SK-N-SH (cell line): ENCODE measurements at regions of chr1 and their contacts with region 1.

Region 1: GRCh38 chr1:225474986-225475820 is 47.4 kb upstream of the LBR start:
- DNase-seq: peak; percentile 93
- H3K4me3 ChIP-seq: peak overlapping the region; percentile 17 to 46; a peak in 2 of 4 replicates
- H3K27ac ChIP-seq: no peak overlapping the region
- H3K4me1 ChIP-seq: peaks cover 0 to 6% of the 10 kb centered on the region in 2 experiments; a peak in 2 of 4 replicates
- H3K27me3 ChIP-seq: no peaks in the 10 kb centered on the region
- CTCF ChIP-seq: peak; percentile 100
- EP300 ChIP-seq: no peak
- RAD21 ChIP-seq: peak; percentile 100

Region 2: GRCh38 chr1:225250432-225250831 is 224.8 kb before region 1 on chr1:
- CTCF ChIA-PET with region 1: no interaction called
- POLR2A ChIA-PET with region 1: no interaction called
- DNase-seq: no peak
- H3K4me3 ChIP-seq: no peak overlapping the region
- H3K27ac ChIP-seq: no peak overlapping the region
- H3K4me1 ChIP-seq: no peaks in the 10 kb centered on the region
- H3K27me3 ChIP-seq: no peaks in the 10 kb centered on the region
- CTCF ChIP-seq: no peak
- EP300 ChIP-seq: no peak
- RAD21 ChIP-seq: no peak

Region 3: DNA sequence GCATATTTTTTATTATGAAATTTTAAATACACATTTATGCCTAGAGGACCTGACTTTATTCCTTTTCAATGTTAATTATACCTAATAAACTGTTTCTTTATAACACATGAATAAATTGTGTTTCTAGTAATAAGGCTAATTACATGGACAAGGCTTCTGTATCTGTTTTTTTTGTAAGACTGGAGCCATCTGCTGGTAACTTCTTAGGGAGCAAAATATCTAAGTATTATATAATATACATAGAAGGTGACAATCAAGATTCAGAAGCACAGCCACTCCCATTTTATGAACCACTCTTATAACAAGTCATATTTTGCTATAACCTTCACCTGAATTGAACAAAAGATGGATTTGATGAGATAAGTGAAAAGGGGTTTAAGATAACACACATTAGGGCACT is 131.6 kb before region 1 on chr1:
- CTCF ChIA-PET with region 1: no interaction called
- POLR2A ChIA-PET with region 1: no interaction called
- DNase-seq: no peak
- H3K4me3 ChIP-seq: no peak overlapping the region
- H3K27ac ChIP-seq: no peak overlapping the region
- H3K4me1 ChIP-seq: peaks cover 0 to 8% of the 10 kb centered on the region in 2 experiments; a peak in 1 of 4 replicates
- H3K27me3 ChIP-seq: no peaks in the 10 kb centered on the region
- CTCF ChIP-seq: peak; percentile 43
- EP300 ChIP-seq: no peak
- RAD21 ChIP-seq: no peak; the same call in 1 of the 2 replicates

Region 4: GRCh38 chr1:225454733-225455132 is 20.5 kb before region 1 on chr1:
- CTCF ChIA-PET with region 1: interaction called, 98 read pairs
- POLR2A ChIA-PET with region 1: no interaction called
- DNase-seq: no peak
- H3K4me3 ChIP-seq: no peak overlapping the region
- H3K27ac ChIP-seq: peak overlapping the region in 1 of 2 experiments; percentile 46; a peak in 2 of 4 replicates
- H3K4me1 ChIP-seq: peaks cover 4 to 13% of the 10 kb centered on the region in 2 experiments; a peak in 2 of 4 replicates
- H3K27me3 ChIP-seq: no peaks in the 10 kb centered on the region
- CTCF ChIP-seq: no peak
- EP300 ChIP-seq: no peak
- RAD21 ChIP-seq: no peak

Region 5: DNA sequence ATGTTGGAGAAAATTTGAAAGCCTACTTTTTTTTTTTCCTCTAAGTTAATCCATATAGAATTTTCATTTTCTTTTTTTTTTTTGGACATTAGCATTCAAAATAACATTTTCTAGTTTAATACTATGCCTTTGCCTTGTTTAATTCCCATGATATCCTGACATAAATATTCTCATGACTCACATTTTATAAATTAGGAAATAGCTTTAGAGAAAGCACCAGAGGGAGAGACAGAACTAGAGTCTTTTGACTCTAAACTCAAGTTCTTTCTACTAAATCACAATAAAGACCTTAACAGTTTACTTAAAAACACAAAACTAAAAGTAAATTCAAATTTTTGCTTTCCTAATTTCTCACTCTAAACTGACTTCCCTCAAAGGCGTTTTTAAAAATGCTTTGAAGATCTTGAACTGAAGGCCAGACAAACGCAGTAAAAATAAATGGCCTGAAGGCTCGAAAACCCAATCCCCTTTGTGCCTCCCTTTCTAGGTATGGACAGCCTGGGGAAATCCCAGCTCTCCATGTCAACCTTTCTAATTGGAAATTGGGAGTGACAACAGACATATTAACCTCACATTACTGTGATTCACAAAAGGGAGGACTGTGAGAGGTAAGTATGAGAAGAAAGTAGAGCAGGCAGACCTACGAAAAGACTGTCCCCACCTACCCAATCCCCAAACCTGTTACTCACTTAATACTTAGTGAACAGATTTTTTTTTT is 73.1 kb after region 1 on chr1:
- CTCF ChIA-PET with region 1: interaction called, 16 read pairs
- POLR2A ChIA-PET with region 1: no interaction called
- DNase-seq: no peak
- H3K4me3 ChIP-seq: no peak overlapping the region
- H3K27ac ChIP-seq: peak overlapping the region; percentile 40 to 76; a peak in 3 of 4 replicates
- H3K4me1 ChIP-seq: peaks cover 9 to 17% of the 10 kb centered on the region in 2 experiments; a peak in 3 of 4 replicates
- H3K27me3 ChIP-seq: no peaks in the 10 kb centered on the region
- CTCF ChIP-seq: no peak
- EP300 ChIP-seq: no peak
- RAD21 ChIP-seq: no peak

Region 6: DNA sequence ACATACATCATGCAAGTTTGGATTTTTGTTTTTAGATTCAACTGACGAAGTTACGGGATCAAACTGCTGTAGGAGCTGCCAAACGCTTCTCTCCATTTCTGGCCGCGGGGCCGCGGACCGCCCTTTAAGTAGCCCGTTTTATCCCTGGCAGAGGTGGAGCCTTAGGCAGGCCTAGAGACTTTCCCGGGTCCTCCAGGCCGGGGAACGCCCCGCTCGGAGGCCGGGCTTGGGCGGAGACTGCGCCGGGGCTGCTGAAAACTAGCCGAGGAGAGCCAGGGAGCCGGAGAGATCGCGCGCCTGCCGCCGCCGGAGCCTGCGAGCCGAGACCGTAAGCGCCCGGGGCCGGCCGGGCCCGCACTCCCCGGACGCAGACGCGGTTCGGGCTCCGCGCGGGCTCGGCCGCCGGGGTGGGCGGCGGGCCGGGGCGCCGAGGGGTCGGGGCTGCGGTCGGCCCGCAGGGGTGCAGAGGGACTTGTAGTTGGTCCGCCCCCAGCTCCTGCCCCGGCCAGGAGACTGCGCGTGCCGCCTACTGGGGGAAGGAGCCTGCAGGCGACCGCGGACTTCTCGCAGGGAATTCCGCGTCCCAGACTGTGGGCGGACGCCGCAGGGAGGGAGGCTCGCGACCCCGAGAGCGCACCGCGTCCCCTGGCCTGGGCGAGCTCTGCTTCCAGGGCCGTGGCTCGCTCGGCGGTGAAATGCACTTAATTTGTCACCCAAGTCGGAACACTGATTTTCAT is 334.8 kb after region 1 on chr1 and contains the start of gene EPHX1:
- CTCF ChIA-PET with region 1: interaction called, 20 read pairs
- POLR2A ChIA-PET with region 1: no interaction called
- DNase-seq: peak; percentile 95
- H3K4me3 ChIP-seq: peak within 1 kb of the TSS; percentile 68 to 97
- H3K27ac ChIP-seq: peak within 1 kb of the TSS; percentile 46 to 79
- H3K4me1 ChIP-seq: peaks cover 5 to 23% of the 10 kb centered on the region in 2 experiments; a peak in 3 of 4 replicates
- H3K27me3 ChIP-seq: no peaks in the 10 kb centered on the region
- CTCF ChIP-seq: peak; percentile 41; the same call in 1 of the 2 replicates
- EP300 ChIP-seq: no peak
- RAD21 ChIP-seq: peak; percentile 2; the same call in 1 of the 2 replicates
- polyA plus RNA-seq, gene EPHX1: 22.6 and 45.7 TPM in 2 replicates

Region 7: GRCh38 chr1:225881969-225882693 is 406.9 kb after region 1 on chr1 and contains the start of gene TMEM63A:
- CTCF ChIA-PET with region 1: interaction called, 21 read pairs
- POLR2A ChIA-PET with region 1: no interaction called
- DNase-seq: peak; percentile 93
- H3K4me3 ChIP-seq: peak within 1 kb of the TSS; percentile 78 to 89
- H3K27ac ChIP-seq: peak within 1 kb of the TSS; percentile 46 to 56
- H3K4me1 ChIP-seq: peaks cover 0 to 34% of the 10 kb centered on the region in 2 experiments; a peak in 1 of 4 replicates
- H3K27me3 ChIP-seq: no peaks in the 10 kb centered on the region
- CTCF ChIP-seq: peak; percentile 37
- EP300 ChIP-seq: no peak
- RAD21 ChIP-seq: no peak
- polyA plus RNA-seq, gene TMEM63A: 13.5 and 18.5 TPM in 2 replicates

Region 8: GRCh38 chr1:225962440-225962975 is 487.3 kb after region 1 on chr1:
- CTCF ChIA-PET with region 1: interaction called, 19 read pairs
- POLR2A ChIA-PET with region 1: no interaction called
- DNase-seq: peak; percentile 71
- H3K4me3 ChIP-seq: peak overlapping the region in 1 of 2 experiments; percentile 43; a peak in 1 of 4 replicates
- H3K27ac ChIP-seq: no peak overlapping the region
- H3K4me1 ChIP-seq: no peaks in the 10 kb centered on the region
- H3K27me3 ChIP-seq: no peaks in the 10 kb centered on the region
- CTCF ChIP-seq: peak; percentile 57
- EP300 ChIP-seq: no peak
- RAD21 ChIP-seq: peak; percentile 41

Region 9: GRCh38 chr1:226195144-226195543 is 719.9 kb after region 1 on chr1:
- CTCF ChIA-PET with region 1: no interaction called
- POLR2A ChIA-PET with region 1: interaction called, 10 read pairs
- DNase-seq: peak; percentile 42
- H3K4me3 ChIP-seq: no peak overlapping the region
- H3K27ac ChIP-seq: no peak overlapping the region
- H3K4me1 ChIP-seq: peaks cover 0 to 4% of the 10 kb centered on the region in 2 experiments; a peak in 1 of 4 replicates
- H3K27me3 ChIP-seq: no peaks in the 10 kb centered on the region; the same call in 1 of the 2 replicates
- CTCF ChIP-seq: no peak
- EP300 ChIP-seq: no peak
- RAD21 ChIP-seq: no peak